ENCODE measurements at regions of chr2 and their contacts with region 1.

Region 1: DNA sequence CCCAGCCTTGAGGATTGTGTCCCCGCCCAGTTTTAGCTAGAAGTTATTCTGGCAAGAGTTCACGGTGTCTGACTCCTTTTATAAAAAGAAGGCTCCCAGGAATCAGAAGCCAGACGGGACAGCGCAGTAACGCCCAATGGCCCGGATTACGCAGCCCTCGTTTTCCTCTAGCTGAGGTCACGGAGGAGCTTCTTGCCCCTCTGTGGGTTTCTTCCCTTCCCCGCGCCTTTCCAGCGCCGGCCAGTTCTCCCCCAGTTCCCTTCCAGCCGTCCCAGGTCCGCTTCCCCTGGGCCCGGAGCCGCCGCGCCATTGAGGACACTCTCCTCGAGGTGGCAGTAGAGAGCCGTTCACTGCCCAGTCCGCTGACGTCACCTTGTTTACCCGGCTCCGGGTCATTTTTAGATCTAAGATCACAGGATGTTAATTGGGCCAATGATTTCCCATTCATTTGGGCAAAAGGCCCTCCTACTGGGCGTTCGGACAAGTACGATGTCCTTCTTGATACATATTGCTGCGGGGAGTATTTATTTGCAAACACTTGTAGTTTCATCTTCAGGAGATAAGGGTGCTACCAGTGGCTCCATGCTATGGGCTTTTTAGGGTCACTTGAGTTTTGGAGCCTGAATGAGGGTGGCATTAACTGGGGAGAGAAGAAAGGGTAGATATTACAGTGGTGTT is 81.5 kb upstream of the PPM1B start:
- DNase-seq: peak; percentile 56
- H3K4me3 ChIP-seq: peak overlapping the region in 1 of 3 experiments; percentile 16
- H3K27ac ChIP-seq: no peak overlapping the region
- H3K4me1 ChIP-seq: no peaks in the 10 kb centered on the region
- H3K27me3 ChIP-seq: no peaks in the 10 kb centered on the region
- CTCF ChIP-seq: peak; percentile 86 to 94

Region 2: DNA sequence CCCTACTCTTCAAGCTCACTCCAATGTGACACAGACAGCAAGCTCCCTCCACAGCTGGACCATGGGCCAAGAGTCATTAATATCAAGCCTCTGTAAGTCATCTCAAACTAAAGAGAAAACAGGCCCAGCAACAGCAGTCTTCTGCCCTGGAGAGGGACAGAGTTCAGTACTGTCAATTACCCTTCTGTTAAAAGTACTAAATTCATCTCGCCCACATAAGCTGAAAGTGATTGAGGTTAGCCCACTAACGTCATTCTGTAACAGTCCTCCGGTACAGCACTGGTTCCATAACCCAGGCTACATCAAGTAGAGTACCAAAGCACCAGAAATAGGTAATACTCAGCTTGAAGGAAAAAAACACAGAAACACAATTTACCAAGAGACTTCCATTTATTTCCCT is 517.3 kb before region 1 on chr2:
- CTCF ChIA-PET with region 1: no interaction called
- dilution Hi-C with region 1: no loop called
- in situ Hi-C with region 1: no loop called
- intact Hi-C with region 1: no loop called
- DNase-seq: no peak
- H3K4me3 ChIP-seq: no peak overlapping the region
- H3K27ac ChIP-seq: no peak overlapping the region
- H3K4me1 ChIP-seq: no peaks in the 10 kb centered on the region
- H3K27me3 ChIP-seq: no peaks in the 10 kb centered on the region
- CTCF ChIP-seq: no peak

Region 3: DNA sequence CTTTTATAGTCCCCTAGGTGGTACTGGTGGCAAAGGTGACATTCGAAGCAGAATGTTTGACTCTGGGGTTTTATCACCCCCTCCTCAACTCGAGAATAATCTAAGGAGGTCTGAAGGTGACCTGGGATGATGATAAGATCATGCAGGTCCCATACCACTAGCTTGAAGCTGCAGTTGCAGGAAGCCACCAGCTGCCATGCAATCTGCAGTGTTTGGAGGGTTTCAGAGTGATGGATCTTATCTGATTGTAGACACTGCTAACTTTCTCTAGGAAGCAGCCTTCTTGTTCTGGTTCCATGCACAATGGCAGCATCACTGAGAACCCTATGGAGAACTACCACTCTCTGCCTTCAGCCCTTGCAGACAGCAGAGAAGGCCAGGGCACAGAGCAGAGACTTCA is 31.9 kb before region 1 on chr2:
- CTCF ChIA-PET with region 1: no interaction called
- dilution Hi-C with region 1: no loop called
- in situ Hi-C with region 1: no loop called
- intact Hi-C with region 1: no loop called
- DNase-seq: no peak
- H3K4me3 ChIP-seq: no peak overlapping the region
- H3K27ac ChIP-seq: no peak overlapping the region
- H3K4me1 ChIP-seq: no peaks in the 10 kb centered on the region
- H3K27me3 ChIP-seq: no peaks in the 10 kb centered on the region
- CTCF ChIP-seq: no peak

Region 4: DNA sequence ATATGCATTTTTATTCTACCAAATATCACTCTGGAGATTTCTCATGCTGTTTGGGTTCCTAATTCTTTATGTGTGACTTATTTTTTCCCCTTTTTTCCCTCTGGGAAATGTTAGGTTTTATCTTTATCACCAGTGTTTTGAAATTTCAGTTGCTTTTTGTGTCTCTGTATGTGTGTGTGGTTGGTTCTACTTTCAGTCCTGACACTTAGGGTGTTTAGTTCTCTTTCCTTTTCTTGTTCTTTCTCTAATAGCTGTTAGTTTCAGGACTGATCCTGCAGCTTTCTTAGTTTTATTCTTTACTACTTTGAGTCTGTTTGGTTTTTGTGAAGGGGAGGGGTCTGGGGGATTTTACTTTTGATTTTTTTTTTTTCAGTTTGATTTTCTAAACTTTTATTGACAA is 104.6 kb after region 1 on chr2:
- CTCF ChIA-PET with region 1: no interaction called
- dilution Hi-C with region 1: no loop called
- in situ Hi-C with region 1: no loop called
- intact Hi-C with region 1: no loop called
- DNase-seq: no peak
- H3K4me3 ChIP-seq: no peak overlapping the region
- H3K27ac ChIP-seq: no peak overlapping the region
- H3K4me1 ChIP-seq: no peaks in the 10 kb centered on the region
- H3K27me3 ChIP-seq: no peaks in the 10 kb centered on the region
- CTCF ChIP-seq: no peak

Region 5: DNA sequence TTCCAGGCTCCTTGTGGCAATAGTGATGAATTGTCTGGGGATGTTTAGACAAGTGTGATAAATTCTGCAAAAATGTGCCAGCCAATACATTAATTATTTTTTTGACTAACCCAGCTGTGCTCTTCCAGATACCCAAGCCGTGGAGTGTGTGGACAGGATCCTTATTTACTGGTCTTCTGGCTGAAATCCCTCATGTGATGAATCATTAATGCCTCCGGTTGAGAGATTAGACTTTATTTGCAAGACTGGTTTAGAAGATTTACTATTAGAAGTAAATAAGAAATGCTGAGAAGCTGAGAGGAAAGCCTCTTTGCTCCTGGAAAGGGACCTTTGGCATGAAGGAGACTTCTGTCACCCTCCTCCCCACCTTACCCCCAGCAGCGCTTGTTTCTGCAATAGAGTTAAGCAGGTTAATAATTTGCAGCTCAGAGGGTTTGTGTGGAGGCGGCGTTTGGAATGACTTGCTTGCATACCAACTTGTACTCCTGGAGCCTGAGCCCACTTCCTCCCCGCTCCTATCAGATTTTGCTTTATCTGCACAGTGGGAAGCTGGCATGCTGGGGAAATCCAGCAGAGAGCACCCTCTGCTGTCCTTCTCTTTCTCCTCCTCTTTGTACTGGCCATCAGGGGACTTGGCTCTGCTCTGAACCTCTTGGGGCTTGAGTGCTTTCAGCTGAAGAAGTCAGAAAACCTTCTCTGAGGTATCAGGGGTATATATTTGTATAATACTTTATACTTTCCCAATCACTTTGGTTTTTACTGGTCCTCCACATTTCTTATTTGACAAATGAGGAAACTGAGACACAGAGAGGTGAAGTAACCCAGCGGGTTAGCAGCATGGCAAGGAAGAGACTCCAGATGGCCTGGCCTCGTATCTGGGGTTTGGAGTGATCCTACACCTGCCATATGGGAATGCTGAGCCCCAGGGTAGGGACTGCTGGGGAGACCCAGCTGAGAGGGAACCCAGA is 204.4 kb after region 1 on chr2:
- CTCF ChIA-PET with region 1: no interaction called
- dilution Hi-C with region 1: no loop called
- in situ Hi-C with region 1: no loop called
- intact Hi-C with region 1: loop called (anchors 1 kb)
- DNase-seq: peak; percentile 85
- H3K4me3 ChIP-seq: peak overlapping the region in 1 of 3 experiments; percentile 7
- H3K27ac ChIP-seq: no peak overlapping the region
- H3K4me1 ChIP-seq: peaks cover 26% of the 10 kb centered on the region
- H3K27me3 ChIP-seq: no peaks in the 10 kb centered on the region
- CTCF ChIP-seq: peak; percentile 52 to 62

Region 6: GRCh38 chr2:44342854-44343253 is 255.7 kb after region 1 on chr2:
- CTCF ChIA-PET with region 1: no interaction called
- dilution Hi-C with region 1: no loop called
- in situ Hi-C with region 1: no loop called
- intact Hi-C with region 1: loop called (anchors 1 kb)
- DNase-seq: no peak
- H3K4me3 ChIP-seq: no peak overlapping the region
- H3K27ac ChIP-seq: no peak overlapping the region
- H3K4me1 ChIP-seq: no peaks in the 10 kb centered on the region
- H3K27me3 ChIP-seq: no peaks in the 10 kb centered on the region
- CTCF ChIP-seq: peak; percentile 23 to 43

Region 7: GRCh38 chr2:44369392-44369791 is 282.2 kb after region 1 on chr2:
- CTCF ChIA-PET with region 1: no interaction called
- dilution Hi-C with region 1: no loop called
- in situ Hi-C with region 1: no loop called
- intact Hi-C with region 1: no loop called
- DNase-seq: no peak
- H3K4me3 ChIP-seq: no peak overlapping the region
- H3K27ac ChIP-seq: no peak overlapping the region
- H3K4me1 ChIP-seq: no peaks in the 10 kb centered on the region
- H3K27me3 ChIP-seq: no peaks in the 10 kb centered on the region
- CTCF ChIP-seq: no peak